Activated CD8-positive, alpha-beta T cell treated with anti-CD3 and anti-CD28 coated beads, Interleukin-2, amount 10 ng/mL, durations not matched to agents 7 days and 5 days (primary cell): ENCODE measurements at regions of chr3 and their contacts with region 1.

Region 1: GRCh38 chr3:33074217-33075067 is 22.5 kb downstream of the GLB1 start:
- DNase-seq: peak; percentile 82
- ATAC-seq: peak; percentile 87
- H3K4me3 Mint-ChIP-seq: no peak overlapping the region
- H3K27ac Mint-ChIP-seq: no peak overlapping the region
- H3K4me1 Mint-ChIP-seq: peaks cover 24% of the 10 kb centered on the region
- H3K27me3 Mint-ChIP-seq: no peaks in the 10 kb centered on the region

Region 2: DNA sequence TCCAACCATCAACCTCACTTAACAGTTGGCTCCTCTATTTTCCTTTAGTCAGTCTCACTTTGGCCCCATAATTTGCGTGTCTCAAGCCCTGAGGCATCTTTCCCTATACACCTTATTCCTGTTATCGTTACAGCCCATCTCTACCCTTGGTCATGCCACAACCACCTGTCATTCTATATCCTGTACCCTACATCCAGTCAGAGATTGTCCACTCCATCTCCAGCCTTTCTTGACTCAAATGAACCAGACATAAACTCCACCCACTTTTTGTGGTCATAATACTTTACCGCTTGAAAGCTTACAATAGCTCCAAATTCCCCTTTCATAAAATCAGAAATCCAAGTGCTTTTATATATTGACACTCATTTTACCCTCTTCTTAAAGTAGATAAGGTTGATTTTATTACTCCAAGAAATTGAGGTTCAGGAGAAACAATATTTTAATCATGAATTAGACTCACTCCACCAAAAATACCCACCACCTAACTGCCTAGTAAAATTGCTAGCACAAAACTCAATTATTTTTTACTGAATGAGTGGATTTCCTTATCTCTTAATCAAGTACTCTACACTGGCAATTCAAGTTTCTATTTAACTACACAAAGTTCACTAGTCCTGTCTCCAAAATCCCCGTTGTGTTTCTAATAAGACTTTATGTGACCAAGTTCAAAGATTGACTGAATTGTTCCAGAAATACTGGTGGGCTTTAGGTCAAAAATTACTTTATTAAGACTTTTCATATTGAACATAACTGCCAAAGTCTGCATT is 113.9 kb before region 1 on chr3:
- CTCF ChIA-PET with region 1: interaction called, 12 read pairs
- POLR2A ChIA-PET with region 1: no interaction called
- DNase-seq: no peak
- ATAC-seq: peak; percentile 32
- H3K4me3 Mint-ChIP-seq: no peak overlapping the region
- H3K27ac Mint-ChIP-seq: peak overlapping the region; percentile 12
- H3K4me1 Mint-ChIP-seq: peaks cover 36% of the 10 kb centered on the region
- H3K27me3 Mint-ChIP-seq: no peaks in the 10 kb centered on the region

Region 3: DNA sequence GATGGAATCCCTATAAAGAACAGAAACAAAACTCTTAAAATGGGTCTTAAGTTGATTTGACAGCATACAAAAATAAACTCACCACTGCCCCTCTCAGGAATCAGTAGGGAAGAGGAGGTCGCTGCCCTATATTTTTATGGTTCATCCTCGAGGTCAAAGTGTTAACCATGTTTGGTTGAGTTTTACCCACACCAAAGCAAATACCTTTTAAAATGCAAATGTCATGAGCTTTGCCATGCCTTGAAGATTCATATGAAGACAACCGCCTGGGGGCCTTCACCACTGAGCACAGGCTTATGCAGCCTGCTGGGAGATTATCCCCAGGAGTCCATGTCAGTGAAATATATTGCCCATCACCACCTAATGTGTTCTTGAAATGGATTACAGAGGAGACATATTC is 43.6 kb before region 1 on chr3:
- CTCF ChIA-PET with region 1: interaction called, 89 read pairs
- POLR2A ChIA-PET with region 1: interaction called, 3 read pairs
- DNase-seq: peak; percentile 80
- ATAC-seq: peak; percentile 97
- H3K4me3 Mint-ChIP-seq: peak overlapping the region; percentile 1
- H3K27ac Mint-ChIP-seq: peak overlapping the region; percentile 28
- H3K4me1 Mint-ChIP-seq: peaks cover 27% of the 10 kb centered on the region
- H3K27me3 Mint-ChIP-seq: peaks cover 3% of the 10 kb centered on the region

Region 4: GRCh38 chr3:33047842-33048834 is 26.3 kb before region 1 on chr3:
- CTCF ChIA-PET with region 1: interaction called, 39 read pairs
- POLR2A ChIA-PET with region 1: interaction called, 5 read pairs
- DNase-seq: peak; percentile 80
- ATAC-seq: peak; percentile 88
- H3K4me3 Mint-ChIP-seq: peak overlapping the region; percentile 74
- H3K27ac Mint-ChIP-seq: peak overlapping the region; percentile 96
- H3K4me1 Mint-ChIP-seq: peaks cover 76% of the 10 kb centered on the region
- H3K27me3 Mint-ChIP-seq: no peaks in the 10 kb centered on the region

Region 5: GRCh38 chr3:33063651-33064051 is 10.8 kb before region 1 on chr3:
- CTCF ChIA-PET with region 1: interaction called, 58 read pairs
- POLR2A ChIA-PET with region 1: no interaction called
- DNase-seq: peak; percentile 78
- ATAC-seq: peak; percentile 85
- H3K4me3 Mint-ChIP-seq: peak overlapping the region; percentile 52
- H3K27ac Mint-ChIP-seq: peak overlapping the region; percentile 89
- H3K4me1 Mint-ChIP-seq: peaks cover 73% of the 10 kb centered on the region
- H3K27me3 Mint-ChIP-seq: no peaks in the 10 kb centered on the region

Region 6: DNA sequence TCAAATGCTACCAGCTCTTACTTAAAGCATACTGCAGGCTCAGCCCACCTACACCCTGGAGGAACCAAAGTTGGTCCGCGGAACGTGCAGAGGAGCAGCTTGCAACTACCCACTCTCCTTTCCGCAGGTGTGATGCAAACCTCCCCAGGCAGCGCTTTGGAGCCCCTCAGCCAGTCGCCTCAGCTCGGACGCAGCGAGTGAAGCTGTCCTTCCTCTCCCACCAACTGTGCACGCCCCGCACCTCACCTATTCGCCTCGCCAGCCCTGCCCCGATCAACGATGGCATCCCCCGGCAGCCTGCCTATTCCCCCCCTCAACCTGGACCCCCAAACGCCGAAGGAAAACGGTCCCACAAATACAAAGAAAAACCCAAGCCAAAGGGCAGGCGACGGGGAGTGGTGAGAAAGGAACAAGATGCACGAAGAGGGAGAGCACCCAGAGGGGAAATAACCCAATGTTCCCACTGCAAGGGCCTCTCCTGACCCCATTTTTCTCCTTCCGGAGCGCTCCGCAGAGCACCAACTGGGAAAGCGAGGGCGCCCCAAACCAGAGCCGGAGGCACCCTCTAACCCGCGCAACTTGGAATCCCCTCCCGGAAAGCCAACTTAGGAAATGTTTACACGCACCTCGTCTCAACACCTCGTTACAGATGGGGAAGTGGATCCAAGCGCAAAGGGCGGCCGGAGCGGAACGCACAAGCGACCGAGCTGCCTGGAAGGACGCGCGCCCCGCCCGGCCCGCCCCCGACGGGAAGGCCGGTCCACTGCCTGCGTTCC is 21.8 kb after region 1 on chr3:
- CTCF ChIA-PET with region 1: interaction called, 13 read pairs
- POLR2A ChIA-PET with region 1: no interaction called
- DNase-seq: peak; percentile 59
- ATAC-seq: peak; percentile 59
- H3K4me3 Mint-ChIP-seq: peak overlapping the region; percentile 96
- H3K27ac Mint-ChIP-seq: peak overlapping the region; percentile 88
- H3K4me1 Mint-ChIP-seq: peaks cover 40% of the 10 kb centered on the region
- H3K27me3 Mint-ChIP-seq: peaks cover 6% of the 10 kb centered on the region